IMR-90 (cell line): ENCODE measurements at regions of chr16 and their contacts with region 1.

Region 1: GRCh38 chr16:31142109-31143010 is 6.8 kb upstream of the PRSS8 start:
- DNase-seq: peak; percentile 98
- ATAC-seq: peak; percentile 98
- H3K4me3 ChIP-seq: peak overlapping the region; percentile 49
- H3K27ac ChIP-seq: peak overlapping the region; percentile 74
- H3K4me1 ChIP-seq: peaks cover 16% of the 10 kb centered on the region
- H3K27me3 ChIP-seq: peaks cover 10% of the 10 kb centered on the region
- CTCF ChIP-seq: peak; percentile 98
- POLR2A ChIP-seq: 0 out of 2 replicates have a peak, but pooled peaks have one; percentile 24
- RAD21 ChIP-seq: peak; percentile 84

Region 2: GRCh38 chr16:30957456-30958174 is 184.7 kb before region 1 on chr16 and contains the start of gene SETD1A:
- CTCF ChIA-PET with region 1: interaction called, 4 read pairs
- POLR2A ChIA-PET with region 1: no interaction called
- dilution Hi-C with region 1: no loop called
- in situ Hi-C with region 1: no loop called
- intact Hi-C with region 1: loop called (anchors 1 kb)
- DNase-seq: peak; percentile 95
- ATAC-seq: peak; percentile 85
- H3K4me3 ChIP-seq: peak within 1 kb of the TSS; percentile 61
- H3K27ac ChIP-seq: peak within 1 kb of the TSS; percentile 95
- H3K4me1 ChIP-seq: peaks cover 6% of the 10 kb centered on the region
- H3K27me3 ChIP-seq: no peaks in the 10 kb centered on the region
- CTCF ChIP-seq: no peak
- POLR2A ChIP-seq: no peak; the same call in 1 of the 2 replicates
- RAD21 ChIP-seq: no peak
- total RNA-seq, gene SETD1A: 0.54 and 0.56 TPM in 2 replicates

Region 3: DNA sequence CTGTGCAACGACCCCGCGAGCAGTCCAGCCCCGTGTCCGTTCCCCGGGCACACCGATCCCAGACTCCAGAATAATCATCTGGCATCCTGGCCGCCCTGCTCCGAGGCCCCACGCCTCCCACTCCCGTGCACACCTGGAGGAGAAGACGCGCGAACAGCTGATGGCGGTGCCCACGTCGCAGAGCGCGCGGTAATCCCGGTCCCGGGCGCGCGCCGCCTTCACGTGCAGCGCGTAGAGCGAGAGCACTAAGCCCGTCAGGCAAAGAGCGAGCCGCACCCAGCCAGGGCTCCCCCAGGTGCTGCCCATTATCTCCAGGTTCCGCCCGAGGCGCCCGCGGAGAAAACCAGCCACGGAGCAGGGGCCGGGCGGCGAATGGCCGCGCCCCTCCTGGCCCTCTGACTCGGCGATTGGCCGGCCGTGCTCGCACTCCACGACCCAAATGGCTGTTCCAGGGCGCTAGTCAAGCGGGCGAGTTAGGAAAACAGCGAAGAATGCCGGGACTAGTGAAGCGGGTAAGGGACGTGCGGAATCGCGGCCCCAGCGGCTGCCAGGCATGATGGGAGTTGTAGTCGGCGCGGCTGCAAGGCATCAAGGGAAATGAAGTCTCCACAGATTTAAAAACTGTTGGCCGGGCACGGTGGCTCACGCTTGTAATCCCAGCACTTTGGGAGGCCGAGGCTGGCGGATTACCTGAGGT is 47.8 kb before region 1 on chr16 and contains the start of gene VKORC1:
- CTCF ChIA-PET with region 1: interaction called, 4 read pairs
- POLR2A ChIA-PET with region 1: no interaction called
- dilution Hi-C with region 1: no loop called
- in situ Hi-C with region 1: no loop called
- intact Hi-C with region 1: loop called (anchors 1 kb)
- DNase-seq: peak; percentile 97
- ATAC-seq: peak; percentile 96
- H3K4me3 ChIP-seq: peak within 1 kb of the TSS; percentile 91
- H3K27ac ChIP-seq: peak within 1 kb of the TSS; percentile 63
- H3K4me1 ChIP-seq: peaks cover 3% of the 10 kb centered on the region
- H3K27me3 ChIP-seq: no peaks in the 10 kb centered on the region
- CTCF ChIP-seq: no peak
- POLR2A ChIP-seq: no peak
- RAD21 ChIP-seq: no peak
- total RNA-seq, gene VKORC1: 61.9 and 65.2 TPM in 2 replicates

Region 4: GRCh38 chr16:31117391-31118197 is 24.8 kb before region 1 on chr16 and contains the start of gene KAT8:
- CTCF ChIA-PET with region 1: interaction called, 5 read pairs
- POLR2A ChIA-PET with region 1: interaction called, 7 read pairs
- dilution Hi-C with region 1: no loop called
- in situ Hi-C with region 1: no loop called
- intact Hi-C with region 1: loop called (anchors 2 kb)
- DNase-seq: peak; percentile 97
- ATAC-seq: peak; percentile 95
- H3K4me3 ChIP-seq: peak within 1 kb of the TSS; percentile 66
- H3K27ac ChIP-seq: peak within 1 kb of the TSS; percentile 61
- H3K4me1 ChIP-seq: 0 out of 2 replicates have a peak, but pooled peaks cover 3% of the 10 kb centered on the region
- H3K27me3 ChIP-seq: no peaks in the 10 kb centered on the region
- CTCF ChIP-seq: no peak
- POLR2A ChIP-seq: peak; percentile 80
- RAD21 ChIP-seq: no peak
- total RNA-seq, gene KAT8: 18.9 and 19.4 TPM in 2 replicates

Region 5: GRCh38 chr16:31157136-31157535 is 14.8 kb after region 1 on chr16:
- CTCF ChIA-PET with region 1: interaction called, 13 read pairs
- POLR2A ChIA-PET with region 1: no interaction called
- dilution Hi-C with region 1: no loop called
- in situ Hi-C with region 1: no loop called
- intact Hi-C with region 1: no loop called
- DNase-seq: no peak
- ATAC-seq: no peak
- H3K4me3 ChIP-seq: no peak overlapping the region
- H3K27ac ChIP-seq: no peak overlapping the region
- H3K4me1 ChIP-seq: no peaks in the 10 kb centered on the region
- H3K27me3 ChIP-seq: peaks cover 2% of the 10 kb centered on the region
- CTCF ChIP-seq: no peak
- POLR2A ChIP-seq: no peak
- RAD21 ChIP-seq: no peak